ENCODE measurements at regions of chr9 and their contacts with region 1.

Region 1: DNA sequence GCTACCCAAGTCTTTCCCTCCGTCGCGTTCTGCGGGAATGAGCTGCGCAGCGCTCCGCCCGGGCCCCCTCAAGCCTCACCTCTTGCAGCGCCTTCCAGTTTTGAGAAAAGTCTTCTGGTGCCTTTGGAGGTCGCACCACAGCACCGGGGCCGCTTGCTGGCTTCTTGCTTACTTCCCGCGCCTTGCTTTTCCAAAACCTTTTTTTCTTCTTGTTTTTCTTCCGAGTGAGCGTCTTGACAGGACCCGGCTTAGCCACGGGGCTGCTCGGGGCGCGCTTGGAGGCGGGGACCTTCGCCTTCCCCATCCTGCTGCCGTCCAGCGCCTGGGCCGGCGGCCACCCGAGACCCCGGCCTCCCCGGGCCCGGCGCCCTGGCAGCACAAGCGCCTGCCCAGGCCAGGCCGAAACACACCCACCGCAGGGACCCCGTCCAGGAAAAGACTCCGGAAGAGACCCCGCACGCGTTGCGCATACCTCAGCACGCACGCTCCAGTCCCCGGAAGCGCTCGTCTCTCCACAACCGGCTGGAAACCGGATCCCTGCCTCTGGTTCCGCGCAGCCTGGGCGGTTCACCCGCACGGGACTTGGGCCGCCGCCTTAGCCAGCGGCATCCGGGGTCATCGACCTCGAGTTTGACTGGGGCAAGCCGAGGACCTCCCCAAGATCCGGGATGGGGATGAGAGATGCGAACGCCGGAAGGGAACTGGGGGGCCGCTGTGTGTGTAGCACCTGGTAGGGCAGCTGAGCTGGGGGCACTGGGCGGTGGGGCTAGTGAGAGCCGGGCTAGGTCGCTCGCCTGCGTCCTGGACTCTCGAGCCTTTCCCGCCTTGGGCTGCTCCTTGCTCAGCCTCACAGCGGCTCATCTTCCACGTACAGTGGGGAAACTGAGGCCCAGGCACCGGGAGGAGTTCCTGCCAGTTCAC is at the start of gene REXO4:
- DNase-seq: peak; percentile 86
- H3K4me3 Mint-ChIP-seq: peak within 1 kb of the TSS; percentile 93
- H3K27ac Mint-ChIP-seq: peak within 1 kb of the TSS; percentile 86
- H3K4me1 Mint-ChIP-seq: peaks cover 56% of the 10 kb centered on the region
- H3K27me3 Mint-ChIP-seq: no peaks in the 10 kb centered on the region
- total RNA-seq, gene REXO4: 42.5 and 43.8 TPM in 2 replicates

Region 2: DNA sequence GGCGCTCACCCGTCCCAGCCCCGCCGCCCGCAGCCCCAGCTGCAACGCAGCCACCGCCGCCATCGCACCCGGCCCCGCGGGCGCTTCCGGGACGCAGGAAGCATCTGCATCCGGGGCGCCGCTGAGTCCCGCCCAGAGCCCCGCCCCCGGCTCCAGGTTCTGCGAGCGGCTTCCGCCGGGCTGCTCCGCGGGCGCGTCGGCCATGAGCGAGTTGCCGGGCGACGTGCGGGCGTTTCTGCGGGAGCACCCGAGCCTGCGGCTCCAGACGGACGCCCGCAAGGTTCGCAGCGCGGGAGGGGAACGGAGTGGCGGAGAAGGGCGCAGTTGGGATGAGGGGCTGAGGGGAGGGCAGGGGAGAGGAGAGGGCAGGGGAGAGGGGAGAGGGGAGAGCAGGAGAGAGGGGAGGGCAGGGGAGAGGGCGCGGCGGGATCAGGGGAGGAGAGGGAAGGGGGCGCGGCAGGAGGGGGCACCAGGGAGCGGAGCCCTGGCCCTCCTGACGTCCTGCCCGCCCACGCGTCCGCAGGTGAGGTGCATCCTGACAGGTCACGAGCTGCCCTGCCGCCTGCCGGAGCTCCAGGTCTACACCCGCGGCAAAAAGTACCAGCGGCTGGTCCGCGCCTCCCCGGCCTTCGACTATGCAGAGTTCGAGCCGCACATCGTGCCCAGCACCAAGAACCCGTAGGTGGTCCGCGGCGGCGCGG is 61.3 kb before region 1 on chr9 and contains the starts of genes SURF1 and SURF2:
- intact Hi-C with region 1: loop called (anchors 1 kb)
- DNase-seq: peak; percentile 88
- H3K4me3 Mint-ChIP-seq: peak within 1 kb of the TSS; percentile 90
- H3K27ac Mint-ChIP-seq: peak within 1 kb of the TSS; percentile 79
- H3K4me1 Mint-ChIP-seq: peaks cover 37% of the 10 kb centered on the region
- H3K27me3 Mint-ChIP-seq: no peaks in the 10 kb centered on the region
- total RNA-seq, gene SURF1: 36.3 and 37.7 TPM in 2 replicates
- total RNA-seq, gene SURF2: 28.6 and 30.9 TPM in 2 replicates

Region 3: GRCh38 chr9:133459476-133460404 is 41.9 kb after region 1 on chr9 and contains the start of gene CACFD1:
- intact Hi-C with region 1: loop called (anchors 1 kb)
- DNase-seq: peak; percentile 80
- H3K4me3 Mint-ChIP-seq: peak within 1 kb of the TSS; percentile 86
- H3K27ac Mint-ChIP-seq: peak within 1 kb of the TSS; percentile 77
- H3K4me1 Mint-ChIP-seq: no peaks in the 10 kb centered on the region
- H3K27me3 Mint-ChIP-seq: peaks cover 11% of the 10 kb centered on the region
- total RNA-seq, gene CACFD1: 1.0 and 1.1 TPM in 2 replicates

Region 4: GRCh38 chr9:134024828-134025605 is 607.2 kb after region 1 on chr9 and contains the start of gene BRD3OS:
- intact Hi-C with region 1: loop called (anchors 5 kb)
- DNase-seq: peak; percentile 92
- H3K4me3 Mint-ChIP-seq: peak within 1 kb of the TSS; percentile 79
- H3K27ac Mint-ChIP-seq: no peak within 1 kb of the TSS
- H3K4me1 Mint-ChIP-seq: no peaks in the 10 kb centered on the region
- H3K27me3 Mint-ChIP-seq: no peaks in the 10 kb centered on the region
- total RNA-seq, gene BRD3OS: 12.3 and 14.5 TPM in 2 replicates

Region 5: DNA sequence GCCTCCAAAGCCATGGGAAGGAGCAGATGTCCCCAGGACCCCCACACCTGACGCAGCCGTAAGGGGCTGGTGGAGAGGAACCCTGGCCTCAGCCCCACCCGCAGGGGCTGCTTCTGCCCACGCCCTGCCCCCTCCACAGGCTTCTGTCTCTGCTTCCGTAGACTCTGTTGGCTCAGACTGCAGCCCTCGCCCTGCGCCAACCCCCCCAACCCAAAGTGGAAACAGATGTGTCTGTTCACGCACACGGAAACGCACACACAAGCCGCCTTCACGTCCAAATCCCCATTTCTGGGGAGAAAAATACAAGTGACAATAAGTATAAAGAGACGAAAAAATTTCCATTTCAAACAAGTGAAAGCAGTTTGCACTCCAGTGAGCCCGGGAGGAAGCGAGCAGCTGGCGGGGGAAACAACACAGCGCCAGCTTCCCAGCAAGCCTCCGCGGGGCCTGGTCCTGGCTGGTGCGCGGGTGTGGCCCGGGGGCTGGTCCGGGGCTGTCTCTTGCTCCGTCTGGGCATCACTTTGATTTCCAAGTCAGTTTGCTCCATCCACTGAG is 875.9 kb after region 1 on chr9:
- intact Hi-C with region 1: no loop called
- DNase-seq: no peak
- H3K4me3 Mint-ChIP-seq: no peak overlapping the region
- H3K27ac Mint-ChIP-seq: no peak overlapping the region
- H3K4me1 Mint-ChIP-seq: no peaks in the 10 kb centered on the region
- H3K27me3 Mint-ChIP-seq: peaks cover 4% of the 10 kb centered on the region

Measured in activated T-helper 1 cell treated with anti-CD3 and anti-CD28 coated beads, Interleukin-12 subunit alpha, Interleukin-12 subunit beta, Interleukin-2, Interleukin-4 antibody, amounts not matched to agents 30 ng/mL and 10 ng/mL and 1 ng/mL, durations not matched to agents 14 hours and 24 hours and 36 hours (primary cell).